Activated CD4-positive, alpha-beta memory T cell treated with anti-CD3 and anti-CD28 coated beads, Interleukin-2, amount 10 ng/mL, durations not matched to agents 7 days and 5 days (primary cell): ENCODE measurements at regions of chr1 and their contacts with region 1.

Region 1: GRCh38 chr1:15128520-15129313 is 24.8 kb upstream of the TMEM51 start:
- DNase-seq: peak; percentile 76
- H3K4me3 Mint-ChIP-seq: no peak overlapping the region
- H3K27ac Mint-ChIP-seq: no peak overlapping the region
- H3K4me1 Mint-ChIP-seq: no peaks in the 10 kb centered on the region
- H3K27me3 Mint-ChIP-seq: peaks cover 23% of the 10 kb centered on the region

Region 2: DNA sequence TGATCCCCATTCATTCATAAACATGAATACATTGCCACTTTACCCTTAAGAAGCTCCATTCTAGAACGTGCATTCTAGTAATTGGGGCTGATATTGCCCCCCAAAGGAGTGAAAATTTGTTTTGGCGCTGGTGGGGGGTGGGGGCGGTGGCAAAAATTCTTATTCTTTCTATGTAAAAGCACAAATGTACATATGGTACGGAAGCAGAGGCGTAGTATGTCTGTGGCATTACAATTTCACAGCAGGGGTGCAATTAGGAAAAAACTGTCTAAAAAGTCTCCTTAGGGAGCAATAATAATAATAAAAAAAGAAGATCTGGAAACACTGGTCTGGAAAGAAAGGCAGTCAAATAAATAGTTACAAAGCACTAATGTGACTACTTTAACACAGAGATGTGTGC is 15.6 kb before region 1 on chr1:
- CTCF ChIA-PET with region 1: interaction called, 15 read pairs
- POLR2A ChIA-PET with region 1: no interaction called
- DNase-seq: no peak
- H3K4me3 Mint-ChIP-seq: no peak overlapping the region
- H3K27ac Mint-ChIP-seq: no peak overlapping the region
- H3K4me1 Mint-ChIP-seq: peaks cover 20% of the 10 kb centered on the region
- H3K27me3 Mint-ChIP-seq: peaks cover 5% of the 10 kb centered on the region

Region 3: DNA sequence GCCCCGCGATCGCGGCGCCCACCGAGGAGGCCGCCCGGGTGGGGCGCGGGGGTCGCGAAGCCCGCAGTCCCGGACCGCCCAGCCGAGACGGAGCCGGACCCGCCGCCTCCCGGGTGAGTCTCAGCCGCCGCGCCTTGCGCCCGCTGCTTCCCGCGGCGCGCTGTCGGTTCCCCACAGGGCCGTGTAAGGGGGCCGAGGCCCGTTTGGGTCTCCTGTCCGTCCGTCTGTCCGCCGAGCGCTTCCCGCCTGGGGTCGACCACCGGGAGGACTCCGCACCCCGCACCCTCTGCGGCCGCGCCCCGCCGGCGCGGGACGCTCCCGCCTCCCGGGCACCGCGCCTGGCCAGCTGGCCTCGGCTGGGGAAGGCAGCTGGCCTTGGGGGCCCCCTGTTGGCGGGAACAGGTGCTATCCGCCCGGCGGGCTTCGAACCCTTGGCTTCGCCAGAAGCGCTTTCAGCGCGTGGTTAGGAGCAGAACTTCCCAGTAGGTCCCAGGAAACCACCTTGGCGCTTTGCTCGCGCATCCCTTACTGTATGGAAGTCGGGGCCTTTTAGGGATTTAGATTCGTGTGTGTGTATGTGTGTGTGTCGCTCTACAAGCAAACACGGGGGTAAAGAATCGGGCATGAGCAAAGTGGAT is 25.2 kb after region 1 on chr1:
- CTCF ChIA-PET with region 1: interaction called, 11 read pairs
- POLR2A ChIA-PET with region 1: no interaction called
- DNase-seq: peak; percentile 32
- H3K4me3 Mint-ChIP-seq: peak overlapping the region; percentile 32
- H3K27ac Mint-ChIP-seq: no peak overlapping the region
- H3K4me1 Mint-ChIP-seq: peaks cover 26% of the 10 kb centered on the region
- H3K27me3 Mint-ChIP-seq: peaks cover 58% of the 10 kb centered on the region

Region 4: GRCh38 chr1:15264769-15265168 is 136.1 kb after region 1 on chr1:
- CTCF ChIA-PET with region 1: interaction called, 64 read pairs
- POLR2A ChIA-PET with region 1: no interaction called
- DNase-seq: no peak
- H3K4me3 Mint-ChIP-seq: no peak overlapping the region
- H3K27ac Mint-ChIP-seq: no peak overlapping the region
- H3K4me1 Mint-ChIP-seq: peaks cover 16% of the 10 kb centered on the region
- H3K27me3 Mint-ChIP-seq: peaks cover 57% of the 10 kb centered on the region

Region 5: DNA sequence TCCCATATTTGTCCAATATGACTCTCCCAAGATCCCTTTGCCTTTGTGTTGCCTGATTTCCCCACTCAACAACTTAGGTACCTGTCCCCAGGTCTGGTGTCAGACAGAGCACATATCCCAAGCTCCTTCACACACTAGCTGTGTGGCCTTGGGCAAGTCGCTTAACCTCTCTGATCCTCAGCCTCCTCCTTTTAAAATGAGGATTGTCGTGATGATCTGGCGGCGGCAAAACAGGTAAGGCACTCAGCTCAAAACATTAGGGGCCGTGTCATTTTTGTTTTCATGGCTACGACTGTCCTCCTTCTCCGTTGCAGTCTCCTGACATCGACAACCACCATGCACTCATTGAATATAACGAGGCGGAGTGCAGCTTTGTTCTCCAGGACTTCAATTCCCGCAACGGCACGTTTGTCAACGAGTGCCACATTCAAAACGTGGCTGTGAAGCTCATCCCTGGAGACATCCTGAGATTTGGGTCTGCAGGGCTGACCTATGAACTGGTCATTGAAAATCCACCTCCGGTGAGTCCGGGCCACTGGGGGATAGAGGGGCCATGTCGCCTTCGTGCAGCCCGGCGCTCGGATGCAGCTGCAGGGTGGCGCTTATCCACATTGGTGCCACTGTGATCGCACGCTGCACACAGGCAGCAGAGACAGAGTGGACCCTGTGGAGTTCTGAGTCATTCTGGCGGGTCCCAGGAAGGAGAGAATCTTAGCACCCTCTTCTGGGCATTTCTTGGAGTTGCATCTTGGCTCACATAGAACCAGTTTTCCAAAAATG is 143.5 kb after region 1 on chr1:
- CTCF ChIA-PET with region 1: interaction called, 64 read pairs
- POLR2A ChIA-PET with region 1: interaction called, 3 read pairs
- DNase-seq: peak; percentile 44
- H3K4me3 Mint-ChIP-seq: no peak overlapping the region
- H3K27ac Mint-ChIP-seq: no peak overlapping the region
- H3K4me1 Mint-ChIP-seq: peaks cover 3% of the 10 kb centered on the region
- H3K27me3 Mint-ChIP-seq: peaks cover 34% of the 10 kb centered on the region

Region 6: DNA sequence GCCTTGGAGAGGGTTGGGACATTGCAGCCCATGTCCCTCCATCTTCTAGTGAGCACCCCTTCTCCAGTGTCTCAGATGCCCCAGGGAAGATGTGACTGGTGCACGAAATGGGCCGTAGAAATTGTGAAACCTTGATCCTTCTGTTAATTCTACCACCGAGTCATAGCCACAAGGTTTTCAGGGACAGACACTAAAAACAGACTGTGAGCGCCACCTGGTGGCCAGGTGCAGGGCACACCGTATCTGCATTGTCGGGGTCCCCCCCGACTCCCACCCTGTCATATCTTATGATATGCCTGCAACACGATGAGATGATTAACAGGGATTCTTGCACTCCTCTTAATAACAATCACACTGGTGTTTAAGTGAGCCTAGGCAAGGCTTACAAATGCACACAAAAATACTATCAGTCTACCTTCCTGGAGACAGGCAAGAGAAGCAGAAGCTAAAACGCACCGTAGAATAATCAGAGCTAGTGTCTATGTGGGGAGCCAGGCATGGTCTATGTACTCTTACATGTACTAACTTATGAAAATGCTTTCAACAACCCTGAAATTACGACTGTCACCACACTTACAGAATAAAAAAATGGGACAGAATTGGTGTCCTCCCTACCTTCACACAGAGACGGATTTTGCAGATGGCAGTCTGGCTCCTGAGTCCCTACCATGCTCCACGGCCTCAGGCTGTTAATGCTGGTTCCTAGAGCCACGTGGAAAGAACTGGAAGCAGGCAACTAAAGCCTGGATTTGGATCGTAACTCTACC is 176.2 kb after region 1 on chr1:
- CTCF ChIA-PET with region 1: interaction called, 38 read pairs
- POLR2A ChIA-PET with region 1: no interaction called
- DNase-seq: peak; percentile 67
- H3K4me3 Mint-ChIP-seq: no peak overlapping the region
- H3K27ac Mint-ChIP-seq: no peak overlapping the region
- H3K4me1 Mint-ChIP-seq: no peaks in the 10 kb centered on the region
- H3K27me3 Mint-ChIP-seq: peaks cover 12% of the 10 kb centered on the region

Region 7: GRCh38 chr1:15430787-15431570 is 302.3 kb after region 1 on chr1:
- CTCF ChIA-PET with region 1: interaction called, 10 read pairs
- POLR2A ChIA-PET with region 1: no interaction called
- DNase-seq: peak; percentile 74
- H3K4me3 Mint-ChIP-seq: no peak overlapping the region
- H3K27ac Mint-ChIP-seq: no peak overlapping the region
- H3K4me1 Mint-ChIP-seq: peaks cover 8% of the 10 kb centered on the region
- H3K27me3 Mint-ChIP-seq: no peaks in the 10 kb centered on the region